CD14-positive monocyte (primary cell): ENCODE measurements at regions of chr11 and their contacts with region 1.

Region 1: DNA sequence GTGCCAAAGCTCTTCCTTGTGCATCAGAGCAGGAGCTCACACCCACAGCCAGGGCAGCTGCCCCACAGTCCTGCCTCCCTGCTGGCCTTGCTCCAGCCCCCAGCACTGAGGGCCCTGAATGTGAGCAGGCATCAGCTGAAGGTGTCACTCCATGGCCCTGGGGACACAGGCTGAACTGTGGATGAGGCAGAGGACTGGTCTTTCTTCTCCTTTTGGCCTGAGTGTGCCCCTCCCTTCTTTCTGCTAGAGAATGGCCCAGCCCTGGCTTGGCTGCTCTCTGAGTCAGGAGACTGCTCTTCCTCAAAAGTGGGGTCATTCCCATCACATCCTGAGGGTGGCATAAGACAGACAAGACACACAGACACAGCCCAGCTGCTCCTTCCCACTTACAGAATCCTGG is 16.2 kb downstream of the OTOG start:
- DNase-seq: peak in 1 of 3 donors; percentile 9
- H3K4me3 ChIP-seq: no peak overlapping the region
- H3K4me3 Mint-ChIP-seq: no peak overlapping the region
- H3K27ac ChIP-seq: no peak overlapping the region
- H3K27ac Mint-ChIP-seq: peak overlapping the region in 1 of 7 donors; percentile 58
- H3K4me1 ChIP-seq: no peaks in the 10 kb centered on the region
- H3K4me1 Mint-ChIP-seq: no peaks in the 10 kb centered on the region
- H3K27me3 ChIP-seq: no peaks in the 10 kb centered on the region
- H3K27me3 Mint-ChIP-seq: peaks cover 4 to 14% (median 6%) of the 10 kb centered on the region in 3 donors
- CTCF ChIP-seq: no peak

Region 2: GRCh38 chr11:17547051-17547577 is 16.1 kb before region 1 on chr11 and contains the start of gene OTOG:
- intact Hi-C with region 1: no loop called
- DNase-seq: no peak
- H3K4me3 ChIP-seq: no peak within 1 kb of the TSS
- H3K4me3 Mint-ChIP-seq: no peak within 1 kb of the TSS
- H3K27ac ChIP-seq: no peak within 1 kb of the TSS
- H3K27ac Mint-ChIP-seq: peak within 1 kb of the TSS in 1 of 7 donors; percentile 11
- H3K4me1 ChIP-seq: peaks cover 0 to 6% of the 10 kb centered on the region in 2 donors
- H3K4me1 Mint-ChIP-seq: peaks cover 6% of the 10 kb centered on the region
- H3K27me3 ChIP-seq: peaks cover 0 to 20% of the 10 kb centered on the region in 2 donors
- H3K27me3 Mint-ChIP-seq: peaks cover 31 to 50% (median 39%) of the 10 kb centered on the region in 3 donors
- CTCF ChIP-seq: no peak
- polyA plus RNA-seq, gene OTOG: not detected

Region 3: DNA sequence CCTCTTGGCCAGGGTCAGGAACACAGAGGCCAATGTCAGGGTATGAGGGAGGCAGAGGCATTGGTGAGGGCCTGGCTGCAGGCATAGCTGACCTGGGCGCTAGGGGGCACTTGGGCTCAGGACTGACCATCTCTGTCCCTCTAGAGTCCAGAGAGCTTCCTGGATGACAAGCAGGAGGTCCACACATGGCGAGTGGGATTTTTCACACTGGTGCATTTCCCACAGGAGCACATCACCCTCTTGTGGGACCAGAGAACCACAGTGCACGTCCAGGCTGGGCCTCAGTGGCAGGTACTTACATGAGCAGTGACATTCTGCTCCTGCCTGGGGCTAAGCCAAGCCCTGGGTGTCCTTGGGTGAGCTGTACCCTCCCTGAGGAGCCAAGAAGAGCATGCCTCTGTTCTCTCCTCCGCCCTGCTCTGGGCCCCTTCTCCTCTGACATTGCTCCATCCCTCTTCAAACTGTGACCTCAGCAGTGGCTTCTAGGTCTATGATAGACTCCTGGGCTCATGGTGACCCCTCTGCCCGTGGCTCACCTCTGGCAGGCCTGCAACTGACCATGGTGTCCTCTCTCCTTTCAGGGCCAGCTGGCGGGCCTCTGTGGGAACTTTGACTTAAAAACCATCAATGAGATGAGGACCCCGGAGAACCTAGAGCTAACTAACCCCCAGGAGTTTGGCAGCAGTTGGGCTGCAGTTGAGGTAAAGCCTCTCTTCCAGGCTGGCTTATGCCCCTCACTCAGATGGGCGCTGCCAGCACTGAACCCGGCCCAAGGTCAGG is 30.4 kb after region 1 on chr11:
- intact Hi-C with region 1: no loop called
- DNase-seq: no peak
- H3K4me3 ChIP-seq: no peak overlapping the region
- H3K4me3 Mint-ChIP-seq: no peak overlapping the region
- H3K27ac ChIP-seq: no peak overlapping the region
- H3K27ac Mint-ChIP-seq: no peak overlapping the region
- H3K4me1 ChIP-seq: no peaks in the 10 kb centered on the region
- H3K4me1 Mint-ChIP-seq: no peaks in the 10 kb centered on the region
- H3K27me3 ChIP-seq: no peaks in the 10 kb centered on the region
- H3K27me3 Mint-ChIP-seq: peaks cover 1 to 6% (median 5%) of the 10 kb centered on the region in 3 donors
- CTCF ChIP-seq: no peak

Region 4: GRCh38 chr11:18775492-18776292 is 1212.4 kb after region 1 on chr11:
- intact Hi-C with region 1: loop called in 1 of 2 experiments (anchors 10 kb)
- DNase-seq: peak; percentile 10 to 38 (median 23)
- H3K4me3 ChIP-seq: no peak overlapping the region
- H3K4me3 Mint-ChIP-seq: no peak overlapping the region
- H3K27ac ChIP-seq: no peak overlapping the region
- H3K27ac Mint-ChIP-seq: no peak overlapping the region
- H3K4me1 ChIP-seq: no peaks in the 10 kb centered on the region
- H3K4me1 Mint-ChIP-seq: no peaks in the 10 kb centered on the region
- H3K27me3 ChIP-seq: no peaks in the 10 kb centered on the region
- H3K27me3 Mint-ChIP-seq: peaks cover 0 to 4% (median 3%) of the 10 kb centered on the region in 3 donors
- CTCF ChIP-seq: peak; percentile 82